A673 (cell line): ENCODE measurements at regions of chr9 and their contacts with region 1.

Region 1: GRCh38 chr9:89096807-89097206 is 81.8 kb downstream of the SHC3 start:
- DNase-seq: no peak
- H3K4me3 ChIP-seq: no peak overlapping the region
- H3K27ac ChIP-seq: no peak overlapping the region
- H3K4me1 ChIP-seq: no peaks in the 10 kb centered on the region
- H3K27me3 ChIP-seq: no peaks in the 10 kb centered on the region
- CTCF ChIP-seq: peak; percentile 40

Region 2: GRCh38 chr9:89655690-89656643 is 559.2 kb after region 1 on chr9:
- CTCF ChIA-PET with region 1: no interaction called
- POLR2A ChIA-PET with region 1: interaction called, 20 read pairs
- intact Hi-C with region 1: no loop called
- DNase-seq: no peak
- H3K4me3 ChIP-seq: no peak overlapping the region
- H3K27ac ChIP-seq: no peak overlapping the region
- H3K4me1 ChIP-seq: no peaks in the 10 kb centered on the region
- H3K27me3 ChIP-seq: no peaks in the 10 kb centered on the region
- CTCF ChIP-seq: no peak